OCI-LY7 (cell line): ENCODE measurements at regions of chr2 and their contacts with region 1.

Region 1: GRCh38 chr2:159650574-159650973 is 34.2 kb upstream of the BAZ2B start:
- DNase-seq: no peak
- H3K4me3 ChIP-seq: no peak overlapping the region
- H3K27ac ChIP-seq: no peak overlapping the region
- H3K4me1 ChIP-seq: no peaks in the 10 kb centered on the region
- CTCF ChIP-seq: no peak

Region 2: DNA sequence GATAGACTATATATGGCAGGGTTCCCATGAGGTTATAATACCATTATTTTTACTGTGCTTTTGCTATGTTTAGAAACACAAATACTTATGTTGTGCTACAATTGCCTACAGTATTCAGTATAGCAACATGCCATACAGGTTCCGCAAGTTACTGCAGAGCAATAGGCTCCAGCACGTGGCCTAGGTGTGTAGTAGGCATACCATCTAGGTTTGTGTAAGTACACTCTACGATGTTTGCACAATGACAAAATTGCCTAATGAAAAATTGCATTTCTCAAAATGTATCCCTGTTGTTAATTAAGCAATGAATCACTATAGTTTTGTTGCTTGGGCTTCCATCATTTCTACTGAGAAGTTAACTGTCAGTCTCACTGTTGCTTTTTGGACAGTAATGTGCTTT is 137.7 kb after region 1 on chr2:
- CTCF ChIA-PET with region 1: no interaction called
- POLR2A ChIA-PET with region 1: no interaction called
- intact Hi-C with region 1: loop called (anchors 5 kb)
- DNase-seq: no peak
- H3K4me3 ChIP-seq: no peak overlapping the region
- H3K27ac ChIP-seq: no peak overlapping the region
- H3K4me1 ChIP-seq: no peaks in the 10 kb centered on the region
- CTCF ChIP-seq: no peak